Breast epithelium (tissue), 4 donors: ENCODE measurements at regions of chrX and their contacts with region 1.

Region 1: DNA sequence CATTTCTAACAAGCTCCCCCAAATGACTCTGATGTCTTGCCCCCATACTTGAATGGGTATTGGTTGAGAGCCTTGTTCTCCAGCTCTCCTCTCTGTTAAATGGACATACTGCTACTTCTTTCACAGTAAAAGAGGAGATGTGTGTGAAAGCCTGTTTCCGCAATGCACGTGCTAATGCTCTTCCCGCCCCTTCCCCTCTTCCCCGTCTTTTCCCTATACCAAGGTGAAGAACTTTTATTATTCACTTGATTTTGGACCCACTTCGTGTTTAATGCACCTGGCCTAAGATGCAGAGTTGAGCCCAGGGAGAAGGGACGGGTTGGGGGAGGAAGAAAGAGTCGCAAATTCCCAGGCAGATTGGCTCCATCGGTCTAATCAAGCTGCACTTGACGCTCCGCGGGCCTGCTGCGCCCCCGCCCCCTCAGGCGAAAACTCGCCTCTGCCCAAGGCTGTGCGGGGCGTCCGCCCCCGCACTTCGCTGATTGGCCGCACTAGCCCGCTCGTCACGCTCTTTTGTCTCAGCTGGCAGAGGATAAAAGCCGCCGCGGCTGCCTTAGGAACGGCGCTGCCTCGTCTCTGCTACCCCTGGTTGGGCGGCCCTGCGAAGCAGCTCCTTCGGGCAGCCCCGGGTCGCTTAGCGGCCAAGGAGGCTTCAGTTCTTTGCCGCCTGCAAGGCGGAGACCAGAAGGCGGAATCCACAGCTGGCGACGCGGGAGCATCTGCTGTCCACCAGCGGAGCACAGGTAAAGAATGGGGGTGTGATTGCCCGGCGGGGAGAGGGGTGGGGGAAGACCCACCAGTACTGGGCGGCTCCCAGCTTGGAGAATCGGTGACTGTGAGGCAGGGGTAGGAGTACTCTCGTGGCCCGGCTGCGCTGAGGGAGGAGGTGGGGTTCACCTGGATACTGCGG is at the start of gene ZCCHC12:
- DNase-seq: no peak
- H3K4me3 ChIP-seq: peak within 1 kb of the TSS; percentile 11 to 60 (median 37)
- H3K27ac ChIP-seq: no peak within 1 kb of the TSS
- H3K4me1 ChIP-seq: no peaks in the 10 kb centered on the region
- H3K27me3 ChIP-seq: peaks cover 0 to 61% of the 10 kb centered on the region in 2 donors
- CTCF ChIP-seq: no peak
- POLR2A ChIP-seq: no peak
- total RNA-seq, gene ZCCHC12: not detected

Region 2: DNA sequence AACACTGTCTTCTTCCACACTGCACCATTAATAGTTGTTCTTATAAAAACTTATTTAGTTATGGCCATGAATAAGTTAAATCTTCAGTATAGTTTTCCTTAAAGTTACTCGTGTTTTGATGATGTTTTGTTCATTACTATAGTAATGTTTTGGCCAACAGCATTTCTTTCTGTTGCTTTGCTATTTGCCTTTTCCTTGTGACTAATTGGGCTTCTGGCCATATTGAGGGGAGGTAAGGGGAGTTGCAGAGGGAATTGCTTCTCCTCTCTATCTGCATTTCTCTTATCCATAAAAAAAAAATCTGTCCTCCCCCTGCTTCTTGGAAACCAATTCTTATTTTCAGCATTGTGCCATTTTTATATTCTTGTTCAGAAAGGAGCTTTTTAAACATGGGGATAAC is 42.6 kb before region 1 on chrX:
- intact Hi-C with region 1: no loop called
- DNase-seq: no peak
- H3K4me3 ChIP-seq: no peak overlapping the region
- H3K27ac ChIP-seq: peak overlapping the region in 1 of 2 donors; percentile 32
- H3K4me1 ChIP-seq: no peaks in the 10 kb centered on the region
- H3K27me3 ChIP-seq: no peaks in the 10 kb centered on the region
- CTCF ChIP-seq: no peak
- POLR2A ChIP-seq: no peak

Region 3: GRCh38 chrX:118807151-118808017 is 16.1 kb before region 1 on chrX:
- intact Hi-C with region 1: loop called (anchors 1 kb)
- DNase-seq: no peak
- H3K4me3 ChIP-seq: no peak overlapping the region
- H3K27ac ChIP-seq: no peak overlapping the region
- H3K4me1 ChIP-seq: no peaks in the 10 kb centered on the region
- H3K27me3 ChIP-seq: peaks cover 0 to 12% of the 10 kb centered on the region in 2 donors
- CTCF ChIP-seq: peak in 2 of 3 donors; percentile 61 to 71
- POLR2A ChIP-seq: no peak

Region 4: DNA sequence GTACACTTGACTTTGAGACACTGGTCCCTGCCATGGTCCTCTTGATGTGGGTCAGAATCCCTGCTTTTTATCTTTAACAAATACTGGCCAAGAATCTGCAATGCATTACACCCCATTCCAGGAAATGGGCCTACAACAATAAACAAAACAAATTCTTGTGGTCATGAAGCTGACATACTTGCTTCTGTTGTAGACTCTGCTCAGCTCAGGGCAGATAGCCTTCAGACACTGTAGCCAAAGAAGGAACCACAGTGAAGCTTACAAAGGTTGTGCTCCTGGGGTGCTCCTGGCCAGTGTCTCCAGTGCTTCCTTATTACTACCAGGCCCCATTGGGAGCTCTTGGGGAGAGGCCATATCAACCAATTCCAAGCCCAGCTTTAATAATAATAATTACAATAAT is 282.3 kb after region 1 on chrX:
- intact Hi-C with region 1: no loop called
- DNase-seq: no peak
- H3K4me3 ChIP-seq: no peak overlapping the region
- H3K27ac ChIP-seq: no peak overlapping the region
- H3K4me1 ChIP-seq: no peaks in the 10 kb centered on the region
- H3K27me3 ChIP-seq: peaks cover 0 to 40% of the 10 kb centered on the region in 2 donors
- CTCF ChIP-seq: no peak
- POLR2A ChIP-seq: no peak